ENCODE measurements at regions of chr1 and their contacts with region 1.

Region 1: GRCh38 chr1:219566951-219567947 is 45.7 kb downstream of the ZC3H11B start:
- DNase-seq: peak in 1 of 4 experiments; percentile 47
- ATAC-seq: peak; percentile 61; the same call in 2 of the 3 replicates
- H3K4me3 ChIP-seq: no peak overlapping the region
- H3K27ac ChIP-seq: no peak overlapping the region
- H3K4me1 ChIP-seq: peaks cover 0 to 3% of the 10 kb centered on the region in 2 experiments; a peak in 1 of 5 replicates
- H3K27me3 ChIP-seq: no peaks in the 10 kb centered on the region
- CTCF ChIP-seq: peak in 2 of 3 experiments; percentile 54 to 64; a peak in 4 of 6 replicates
- EP300 ChIP-seq: no peak
- POLR2A ChIP-seq: no peak
- RAD21 ChIP-seq: peak; percentile 45 to 71

Region 2: GRCh38 chr1:219639876-219640577 is 72.8 kb after region 1 on chr1:
- CTCF ChIA-PET with region 1: no interaction called
- POLR2A ChIA-PET with region 1: no interaction called
- in situ Hi-C with region 1: loop called (anchors 5 kb)
- intact Hi-C with region 1: no loop called
- DNase-seq: no peak
- ATAC-seq: no peak
- H3K4me3 ChIP-seq: no peak overlapping the region
- H3K27ac ChIP-seq: no peak overlapping the region
- H3K4me1 ChIP-seq: no peaks in the 10 kb centered on the region
- H3K27me3 ChIP-seq: no peaks in the 10 kb centered on the region
- CTCF ChIP-seq: no peak
- EP300 ChIP-seq: no peak
- POLR2A ChIP-seq: no peak
- RAD21 ChIP-seq: no peak

Region 3: GRCh38 chr1:219732814-219733491 is 165.7 kb after region 1 on chr1:
- CTCF ChIA-PET with region 1: no interaction called
- POLR2A ChIA-PET with region 1: no interaction called
- in situ Hi-C with region 1: no loop called
- intact Hi-C with region 1: loop called (anchors 5 kb)
- DNase-seq: no peak
- ATAC-seq: no peak
- H3K4me3 ChIP-seq: no peak overlapping the region
- H3K27ac ChIP-seq: no peak overlapping the region
- H3K4me1 ChIP-seq: peaks cover 0 to 7% of the 10 kb centered on the region in 2 experiments; a peak in 2 of 5 replicates
- H3K27me3 ChIP-seq: no peaks in the 10 kb centered on the region
- CTCF ChIP-seq: no peak
- EP300 ChIP-seq: no peak
- POLR2A ChIP-seq: no peak
- RAD21 ChIP-seq: no peak